ENCODE measurements at regions of chr4 and their contacts with region 1.

Region 1: DNA sequence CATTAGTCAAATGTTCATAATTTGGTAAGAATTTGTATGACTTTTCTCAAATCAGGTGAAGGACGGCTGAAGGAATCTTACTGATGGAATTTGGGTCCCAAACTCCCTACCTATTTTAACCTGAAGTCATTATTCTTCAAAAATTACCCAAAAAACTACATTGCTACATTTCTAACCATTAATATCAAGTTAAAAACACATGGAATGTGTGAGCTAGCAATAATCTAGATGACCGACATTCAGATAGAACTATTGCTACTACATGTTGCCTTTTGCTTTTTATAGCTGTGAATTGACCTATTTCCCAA is 25.3 kb upstream of the WWC2 start:
- DNase-seq: no peak
- H3K4me3 ChIP-seq: no peak overlapping the region
- H3K27ac ChIP-seq: no peak overlapping the region
- H3K4me1 ChIP-seq: no peaks in the 10 kb centered on the region
- H3K27me3 ChIP-seq: no peaks in the 10 kb centered on the region
- CTCF ChIP-seq: no peak

Region 2: DNA sequence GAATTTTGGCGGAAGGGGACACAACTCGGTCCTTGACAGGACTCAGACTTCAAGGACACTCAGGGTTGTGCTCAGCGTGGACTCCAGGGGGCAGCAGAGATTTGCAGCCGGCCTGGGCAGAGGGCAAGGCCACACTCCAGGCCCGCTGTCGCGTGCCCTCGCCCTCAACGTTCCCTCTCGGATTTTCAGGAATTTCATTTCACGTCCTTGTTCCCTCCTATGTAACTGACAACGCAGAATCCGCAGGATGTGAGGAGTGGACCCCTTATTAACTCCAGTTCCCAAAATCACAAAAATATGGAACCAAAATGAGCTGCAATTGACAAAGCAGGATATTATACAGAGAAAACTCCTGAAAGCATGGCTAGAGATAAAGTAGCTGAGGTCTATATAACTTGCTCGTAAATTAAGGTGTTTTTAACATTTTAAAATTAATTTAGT is 135.6 kb before region 1 on chr4:
- intact Hi-C with region 1: loop called (anchors 2 kb)
- DNase-seq: peak; percentile 72
- H3K4me3 ChIP-seq: no peak overlapping the region
- H3K27ac ChIP-seq: no peak overlapping the region
- H3K4me1 ChIP-seq: no peaks in the 10 kb centered on the region
- H3K27me3 ChIP-seq: peaks cover 20% of the 10 kb centered on the region
- CTCF ChIP-seq: peak; percentile 95